ENCODE measurements at regions of chr12 and their contacts with region 1.

Region 1: DNA sequence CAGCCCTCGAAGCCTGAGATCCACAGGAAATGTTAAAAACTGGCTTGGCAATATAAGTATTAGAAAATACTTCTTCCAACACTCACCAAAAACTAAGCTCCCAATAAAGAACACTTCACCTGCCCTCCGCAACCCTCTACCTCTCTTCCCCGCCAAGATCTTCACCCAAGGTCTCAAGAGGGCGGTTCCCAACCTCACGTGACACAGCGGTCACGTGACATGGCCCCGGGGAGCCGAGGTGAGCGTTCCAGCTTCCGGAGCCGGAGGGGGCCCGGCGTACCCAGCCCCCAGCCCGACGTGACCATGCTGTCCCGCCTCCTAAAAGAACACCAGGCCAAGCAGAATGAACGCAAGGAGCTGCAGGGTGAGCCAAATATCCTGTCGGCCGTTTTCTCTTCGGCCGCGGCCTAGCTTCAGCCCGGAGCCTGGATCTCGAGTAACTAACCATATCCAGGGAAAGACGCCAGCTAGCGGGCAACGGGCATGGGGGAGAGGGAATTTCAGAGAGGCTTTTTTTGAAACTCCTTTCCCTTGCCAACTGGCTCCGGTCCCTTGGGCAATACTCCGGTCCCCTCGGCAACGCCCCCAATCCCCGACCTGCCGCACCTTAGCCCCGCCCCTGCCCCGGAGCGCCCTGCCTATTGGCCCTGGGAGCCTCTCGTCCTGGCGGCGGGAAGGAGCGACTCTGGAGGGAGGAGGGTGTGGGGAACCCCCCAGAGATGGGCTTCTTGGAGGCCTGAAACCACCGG is at the start of gene BLOC1S1:
- DNase-seq: peak; percentile 97
- ATAC-seq: peak; percentile 92
- H3K4me3 Mint-ChIP-seq: peak within 1 kb of the TSS; percentile 93
- H3K27ac Mint-ChIP-seq: peak within 1 kb of the TSS; percentile 95
- H3K4me1 Mint-ChIP-seq: peaks cover 45% of the 10 kb centered on the region
- H3K27me3 Mint-ChIP-seq: no peaks in the 10 kb centered on the region
- total RNA-seq, gene BLOC1S1: 116 to 135 TPM

Region 2: DNA sequence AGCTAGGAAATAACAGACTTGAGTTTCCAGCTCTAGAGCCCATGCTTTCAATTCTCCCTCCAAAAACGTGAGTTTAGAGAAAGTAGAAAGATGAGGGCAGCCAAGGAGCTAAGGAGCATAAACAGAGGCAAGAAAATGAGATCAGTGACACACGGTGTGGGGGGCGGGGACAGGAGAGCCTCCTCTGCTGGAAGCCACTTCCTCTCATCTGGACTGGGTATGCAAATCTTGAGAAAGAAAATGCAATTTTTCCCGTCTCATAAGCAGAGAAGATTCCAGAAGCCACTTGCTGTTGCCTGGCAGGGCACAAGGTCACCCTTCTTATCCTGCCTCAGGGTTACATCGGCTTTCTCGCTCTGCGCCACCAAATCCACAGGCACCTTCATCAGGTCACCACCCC is 73.3 kb before region 1 on chr12:
- POLR2A ChIA-PET with region 1: no interaction called
- DNase-seq: peak; percentile 49
- ATAC-seq: peak; percentile 37
- H3K4me3 Mint-ChIP-seq: no peak overlapping the region
- H3K27ac Mint-ChIP-seq: peak overlapping the region; percentile 27
- H3K4me1 Mint-ChIP-seq: peaks cover 26% of the 10 kb centered on the region
- H3K27me3 Mint-ChIP-seq: peaks cover 5% of the 10 kb centered on the region

Region 3: GRCh38 chr12:55728939-55729823 is 13.2 kb after region 1 on chr12 and contains the start of gene CD63:
- POLR2A ChIA-PET with region 1: interaction called, 31 read pairs
- DNase-seq: peak; percentile 75
- ATAC-seq: peak; percentile 66
- H3K4me3 Mint-ChIP-seq: peak within 1 kb of the TSS; percentile 85
- H3K27ac Mint-ChIP-seq: peak within 1 kb of the TSS; percentile 86
- H3K4me1 Mint-ChIP-seq: peaks cover 47% of the 10 kb centered on the region
- H3K27me3 Mint-ChIP-seq: no peaks in the 10 kb centered on the region
- total RNA-seq, gene CD63: 150 to 165 TPM

Region 4: DNA sequence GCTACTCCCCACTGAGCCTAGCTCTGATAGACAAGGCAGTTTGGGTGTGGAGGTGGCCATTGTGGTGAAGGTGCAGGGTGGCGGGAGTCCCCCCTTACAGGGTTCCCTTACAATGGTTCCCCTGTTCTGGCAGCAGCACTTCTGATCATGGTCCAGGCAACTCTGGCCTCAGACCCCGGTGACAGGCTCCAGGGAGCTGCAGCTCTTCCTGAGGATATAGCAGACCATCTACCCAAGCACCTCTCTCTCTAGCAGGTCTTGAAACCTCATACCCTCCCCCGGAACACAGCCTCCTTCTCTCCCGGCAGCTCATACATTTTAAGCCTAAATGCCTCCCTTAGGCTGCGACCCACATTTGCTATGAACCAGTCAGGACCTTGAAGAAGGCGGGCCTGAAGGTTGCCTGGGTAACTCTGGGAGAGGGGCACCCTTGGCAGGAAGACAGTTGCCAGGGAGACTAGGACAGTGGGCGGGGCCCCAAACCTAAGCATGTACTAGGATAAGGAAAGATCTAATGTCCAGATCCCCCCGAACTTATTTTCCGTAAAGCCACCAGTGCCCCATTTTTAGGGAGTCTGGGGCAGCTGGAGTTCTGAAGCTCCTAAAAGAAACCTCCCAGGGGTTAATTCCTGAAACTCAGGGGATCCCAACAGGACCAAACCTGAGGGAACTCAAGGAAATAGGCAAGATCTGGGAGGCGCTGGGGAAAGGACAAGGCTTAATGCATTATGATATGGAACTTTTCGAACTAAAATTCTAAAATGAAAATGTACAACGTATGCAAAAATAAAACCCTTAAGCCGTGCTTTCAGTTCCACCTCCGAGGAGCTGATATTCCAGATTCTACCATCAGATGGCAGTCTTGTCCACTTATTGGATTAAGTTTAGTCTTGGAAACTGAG is 22.4 kb after region 1 on chr12:
- POLR2A ChIA-PET with region 1: interaction called, 11 read pairs
- DNase-seq: peak; percentile 73
- ATAC-seq: peak; percentile 74
- H3K4me3 Mint-ChIP-seq: peak overlapping the region; percentile 89
- H3K27ac Mint-ChIP-seq: peak overlapping the region; percentile 92
- H3K4me1 Mint-ChIP-seq: peaks cover 32% of the 10 kb centered on the region
- H3K27me3 Mint-ChIP-seq: peaks cover 4% of the 10 kb centered on the region

Measured in activated naive CD8-positive, alpha-beta T cell treated with anti-CD3 and anti-CD28 coated beads, Interleukin-2, amount 10 ng/mL, durations not matched to agents 7 days and 5 days (primary cell).